B cell (primary cell): ENCODE measurements at regions of chr16 and their contacts with region 1.

Region 1: DNA sequence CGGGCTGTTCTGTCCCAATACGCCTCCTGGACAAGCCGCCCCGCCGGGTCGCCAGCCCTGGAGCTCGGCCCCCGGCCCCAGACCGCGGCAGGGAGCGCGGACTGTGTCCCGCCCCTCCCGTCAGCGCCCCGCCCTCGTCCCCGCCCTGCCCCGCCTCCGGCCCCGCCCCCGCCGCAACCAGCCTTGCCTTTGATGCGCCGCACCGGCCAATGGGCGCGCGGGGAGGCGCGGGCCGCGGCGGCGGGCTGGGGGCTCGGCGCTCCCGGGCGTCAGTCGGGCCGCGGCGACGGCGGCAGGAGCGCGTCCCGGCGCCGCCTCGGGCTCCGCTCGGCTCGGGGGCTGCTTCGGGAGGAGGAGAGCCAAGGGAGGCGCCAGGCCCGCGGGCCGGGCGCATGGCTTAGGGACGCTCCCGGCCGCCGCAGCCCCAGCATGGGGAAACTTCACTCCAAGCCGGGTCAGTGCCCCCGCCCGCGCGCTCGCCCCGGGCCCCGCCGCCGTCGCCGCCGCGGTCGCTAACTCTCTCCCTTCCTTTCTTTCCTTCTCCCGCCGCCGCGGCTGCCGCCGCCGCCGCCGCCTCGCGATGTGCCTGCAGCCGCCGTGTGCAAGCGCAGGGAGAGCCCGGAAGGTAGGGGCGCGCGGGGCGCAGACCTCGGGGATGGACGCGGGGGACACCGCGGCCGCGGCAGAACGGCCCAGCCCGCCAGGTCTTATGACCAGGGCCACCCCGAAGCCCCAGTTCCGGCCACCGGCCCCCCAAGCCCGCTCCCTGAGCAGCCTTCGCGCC is at the start of gene NKD1:
- DNase-seq: peak; percentile 80
- ATAC-seq: peak; percentile 88
- H3K4me3 ChIP-seq: peak within 1 kb of the TSS; percentile 57 to 90 (median 80)
- H3K4me3 Mint-ChIP-seq: peak within 1 kb of the TSS; percentile 94
- H3K27ac ChIP-seq: no peak within 1 kb of the TSS
- H3K27ac Mint-ChIP-seq: peak within 1 kb of the TSS; percentile 77
- H3K4me1 ChIP-seq: peaks cover 6 to 12% of the 10 kb centered on the region in 2 donors
- H3K4me1 Mint-ChIP-seq: peaks cover 7% of the 10 kb centered on the region
- H3K27me3 ChIP-seq: peaks cover 0 to 30% (median 2%) of the 10 kb centered on the region in 4 experiments
- H3K27me3 Mint-ChIP-seq: peaks cover 32% of the 10 kb centered on the region
- CTCF ChIP-seq: no peak
- total RNA-seq, gene NKD1: 1.9 and 2.7 TPM in 2 replicates

Region 2: DNA sequence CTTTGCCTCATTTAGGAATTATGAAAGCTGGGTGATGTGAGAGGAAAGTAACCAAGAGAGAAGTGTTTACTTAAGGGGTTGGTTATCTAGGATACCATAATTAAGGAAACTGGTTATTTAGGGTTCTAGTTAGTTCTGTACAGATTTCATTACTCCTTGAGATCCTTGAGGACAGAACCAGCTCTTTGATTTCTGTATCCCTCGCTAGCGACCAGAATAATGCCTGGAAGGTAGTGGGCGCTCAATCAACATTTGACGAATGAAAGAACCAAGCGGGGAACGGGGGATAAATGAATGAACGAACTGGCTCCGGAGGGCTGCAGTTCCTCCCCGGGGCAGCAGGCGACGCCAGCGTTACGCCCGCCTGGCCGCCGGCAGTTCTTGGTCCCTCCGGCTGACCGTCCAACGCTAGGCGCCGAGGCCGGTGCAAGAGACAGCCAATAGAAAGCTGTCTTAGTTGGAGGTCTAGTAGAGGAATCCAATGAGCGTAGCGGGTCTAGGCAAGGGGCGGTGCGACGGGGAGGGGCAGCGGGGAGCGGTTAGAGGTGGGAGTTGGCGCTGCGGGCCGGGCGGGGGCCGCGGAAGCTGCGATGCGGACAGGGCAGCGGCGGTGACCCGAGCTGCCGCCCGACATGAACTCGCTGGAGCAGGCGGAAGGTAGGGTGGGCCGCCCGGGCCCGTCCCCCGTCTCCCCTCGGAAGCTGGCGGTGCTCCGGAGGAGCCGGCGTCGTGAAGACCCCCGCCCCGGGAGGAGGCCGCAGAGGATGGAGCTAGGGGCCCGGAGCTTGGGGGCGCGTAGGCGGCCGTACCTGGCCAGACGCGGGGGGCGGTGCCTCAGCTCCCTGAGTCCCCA is 523.4 kb before region 1 on chr16 and contains the start of gene CNEP1R1:
- CTCF ChIA-PET with region 1: no interaction called
- POLR2A ChIA-PET with region 1: no interaction called
- intact Hi-C with region 1: loop called (anchors 5 kb)
- DNase-seq: peak; percentile 98
- ATAC-seq: peak; percentile 94
- H3K4me3 ChIP-seq: peak within 1 kb of the TSS; percentile 87 to 93 (median 92)
- H3K4me3 Mint-ChIP-seq: peak within 1 kb of the TSS; percentile 93
- H3K27ac ChIP-seq: peak within 1 kb of the TSS; percentile 31 to 78
- H3K27ac Mint-ChIP-seq: peak within 1 kb of the TSS; percentile 89
- H3K4me1 ChIP-seq: peaks cover 12 to 14% of the 10 kb centered on the region in 2 donors
- H3K4me1 Mint-ChIP-seq: peaks cover 23% of the 10 kb centered on the region
- H3K27me3 ChIP-seq: no peaks in the 10 kb centered on the region
- H3K27me3 Mint-ChIP-seq: peaks cover 7% of the 10 kb centered on the region
- CTCF ChIP-seq: peak; percentile 100
- total RNA-seq, gene CNEP1R1: 32.9 and 36.9 TPM in 2 replicates

Region 3: GRCh38 chr16:50210266-50211038 is 337.9 kb before region 1 on chr16:
- CTCF ChIA-PET with region 1: no interaction called
- POLR2A ChIA-PET with region 1: no interaction called
- intact Hi-C with region 1: no loop called
- DNase-seq: peak; percentile 59
- ATAC-seq: peak; percentile 77
- H3K4me3 ChIP-seq: no peak overlapping the region
- H3K4me3 Mint-ChIP-seq: peak overlapping the region; percentile 38
- H3K27ac ChIP-seq: peak overlapping the region in 1 of 2 donors; percentile 20
- H3K27ac Mint-ChIP-seq: peak overlapping the region; percentile 67
- H3K4me1 ChIP-seq: peaks cover 17% of the 10 kb centered on the region in 2 donors
- H3K4me1 Mint-ChIP-seq: peaks cover 28% of the 10 kb centered on the region
- H3K27me3 ChIP-seq: no peaks in the 10 kb centered on the region
- H3K27me3 Mint-ChIP-seq: no peaks in the 10 kb centered on the region
- CTCF ChIP-seq: peak; percentile 56

Region 4: GRCh38 chr16:50368410-50369132 is 179.7 kb before region 1 on chr16 and contains the start of gene BRD7:
- CTCF ChIA-PET with region 1: no interaction called
- POLR2A ChIA-PET with region 1: no interaction called
- intact Hi-C with region 1: loop called (anchors 1 kb)
- DNase-seq: peak; percentile 85
- ATAC-seq: peak; percentile 95
- H3K4me3 ChIP-seq: peak within 1 kb of the TSS; percentile 45 to 82 (median 66)
- H3K4me3 Mint-ChIP-seq: peak within 1 kb of the TSS; percentile 91
- H3K27ac ChIP-seq: peak within 1 kb of the TSS; percentile 57 to 88
- H3K27ac Mint-ChIP-seq: peak within 1 kb of the TSS; percentile 88
- H3K4me1 ChIP-seq: peaks cover 26 to 32% of the 10 kb centered on the region in 2 donors
- H3K4me1 Mint-ChIP-seq: peaks cover 41% of the 10 kb centered on the region
- H3K27me3 ChIP-seq: no peaks in the 10 kb centered on the region
- H3K27me3 Mint-ChIP-seq: peaks cover 4% of the 10 kb centered on the region
- CTCF ChIP-seq: peak; percentile 56
- total RNA-seq, gene BRD7: 64.5 and 69.7 TPM in 2 replicates

Region 5: DNA sequence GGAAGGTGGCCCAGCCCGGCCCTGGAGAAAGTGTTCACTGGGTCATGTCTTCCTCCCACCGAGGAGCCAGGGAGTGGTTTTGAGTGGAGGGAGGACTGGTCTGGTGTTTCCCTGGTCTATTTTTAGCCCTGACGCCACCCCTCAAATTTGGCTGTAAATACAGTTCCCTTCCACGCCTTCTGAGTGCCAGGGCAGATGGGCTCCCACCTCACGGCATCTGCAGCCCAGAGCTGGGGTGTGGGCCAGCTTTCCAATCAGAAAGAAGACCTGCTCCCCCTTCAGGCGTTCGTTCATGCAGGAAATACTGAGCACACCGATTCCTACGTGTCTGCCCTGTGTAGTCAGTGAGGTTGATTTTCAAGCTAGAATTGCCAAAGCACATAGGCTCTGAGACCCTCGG is 79.1 kb after region 1 on chr16:
- CTCF ChIA-PET with region 1: interaction called, 13 read pairs
- POLR2A ChIA-PET with region 1: no interaction called
- intact Hi-C with region 1: loop called (anchors 1 kb)
- DNase-seq: peak; percentile 65
- ATAC-seq: peak; percentile 82
- H3K4me3 ChIP-seq: no peak overlapping the region
- H3K4me3 Mint-ChIP-seq: peak overlapping the region; percentile 53
- H3K27ac ChIP-seq: no peak overlapping the region
- H3K27ac Mint-ChIP-seq: peak overlapping the region; percentile 66
- H3K4me1 ChIP-seq: peaks cover 12 to 14% of the 10 kb centered on the region in 2 donors
- H3K4me1 Mint-ChIP-seq: peaks cover 13% of the 10 kb centered on the region
- H3K27me3 ChIP-seq: no peaks in the 10 kb centered on the region
- H3K27me3 Mint-ChIP-seq: no peaks in the 10 kb centered on the region
- CTCF ChIP-seq: peak; percentile 16

Region 6: DNA sequence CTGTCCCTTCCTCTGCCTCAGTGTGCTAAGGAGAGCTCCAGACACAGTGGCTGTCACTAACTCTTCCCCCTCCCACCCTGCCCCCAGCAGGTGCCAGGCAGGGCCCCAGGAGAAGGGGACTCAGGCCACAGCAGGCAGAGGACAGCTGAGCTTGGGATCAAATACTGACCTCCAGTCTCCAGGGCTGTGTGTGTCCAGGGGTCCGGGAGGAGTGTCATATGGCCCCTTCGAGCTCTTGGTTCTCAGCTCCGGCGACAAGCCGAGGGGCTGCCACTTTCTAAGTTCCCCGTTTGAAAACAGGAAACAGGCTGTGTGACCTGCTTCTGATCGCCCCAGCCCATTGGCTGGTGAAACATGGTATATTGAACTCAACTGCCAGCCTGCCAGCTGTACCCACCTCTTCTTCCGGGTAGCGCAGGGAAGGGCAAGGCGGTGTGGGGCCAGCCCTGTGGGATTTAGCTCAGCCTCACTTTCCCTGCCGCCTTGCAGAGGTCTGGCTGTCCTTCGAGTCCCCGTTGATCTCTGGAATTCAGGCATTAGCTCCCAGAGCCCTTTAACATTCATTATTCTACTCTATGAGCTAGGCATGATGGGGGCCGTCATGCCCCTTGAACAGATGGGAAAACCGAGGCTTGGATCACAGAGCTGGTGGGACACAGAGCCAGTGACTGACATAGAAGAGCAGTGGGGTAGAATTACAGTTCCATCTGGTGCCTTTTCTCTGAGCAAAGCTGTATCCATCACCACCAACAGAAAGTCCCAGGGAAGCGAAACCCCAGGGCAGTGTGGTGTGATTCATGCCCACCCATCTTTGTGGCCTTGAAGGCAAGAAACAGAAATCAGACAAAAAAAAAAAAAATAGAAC is 132.9 kb after region 1 on chr16 and contains the start of gene SNX20:
- CTCF ChIA-PET with region 1: no interaction called
- POLR2A ChIA-PET with region 1: no interaction called
- intact Hi-C with region 1: loop called (anchors 5 kb)
- DNase-seq: peak; percentile 81
- ATAC-seq: peak; percentile 76
- H3K4me3 ChIP-seq: peak within 1 kb of the TSS; percentile 76 to 96 (median 93)
- H3K4me3 Mint-ChIP-seq: peak within 1 kb of the TSS; percentile 93
- H3K27ac ChIP-seq: peak within 1 kb of the TSS; percentile 92 to 95
- H3K27ac Mint-ChIP-seq: peak within 1 kb of the TSS; percentile 98
- H3K4me1 ChIP-seq: peaks cover 74 to 76% of the 10 kb centered on the region in 2 donors
- H3K4me1 Mint-ChIP-seq: peaks cover 73% of the 10 kb centered on the region
- H3K27me3 ChIP-seq: no peaks in the 10 kb centered on the region
- H3K27me3 Mint-ChIP-seq: no peaks in the 10 kb centered on the region
- CTCF ChIP-seq: no peak
- total RNA-seq, gene SNX20: 43.0 and 47.7 TPM in 2 replicates

Region 7: DNA sequence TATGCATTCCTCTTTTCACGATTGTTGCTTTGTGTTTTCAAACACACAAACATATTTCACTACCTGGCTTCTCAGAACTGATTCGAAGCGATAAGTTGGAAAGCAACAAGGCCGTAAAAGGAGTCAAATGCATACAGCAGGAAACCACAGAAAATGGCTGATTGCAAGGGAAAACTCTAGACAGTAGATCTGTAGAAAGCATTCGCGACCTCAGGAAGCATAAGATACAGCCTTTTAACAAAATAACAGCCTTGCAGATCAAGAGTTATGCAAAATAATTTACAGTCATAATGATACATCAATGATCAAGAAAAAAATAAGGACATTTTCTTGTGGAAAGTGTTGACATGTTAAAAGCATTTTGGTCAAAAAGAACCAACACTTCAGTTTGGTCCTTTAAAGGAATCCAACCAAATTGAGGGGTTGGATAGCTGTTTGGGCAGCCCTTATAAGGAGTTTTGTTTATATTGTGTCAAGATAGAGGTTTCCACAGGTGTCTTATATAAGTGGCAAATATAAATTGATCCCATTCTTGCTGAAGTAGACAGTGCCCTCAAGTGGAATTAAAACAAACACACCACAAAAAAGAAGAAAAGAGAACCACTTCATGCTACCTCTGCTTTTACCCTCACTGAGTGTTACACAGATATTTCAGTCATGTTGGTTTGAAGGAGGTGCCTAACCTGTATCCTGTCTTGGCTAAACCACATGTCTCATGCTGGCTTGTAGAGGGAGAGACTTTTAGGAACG is 199.1 kb after region 1 on chr16:
- CTCF ChIA-PET with region 1: interaction called, 4 read pairs
- POLR2A ChIA-PET with region 1: no interaction called
- intact Hi-C with region 1: loop called (anchors 1 kb)
- DNase-seq: peak; percentile 60
- ATAC-seq: peak; percentile 61
- H3K4me3 ChIP-seq: no peak overlapping the region
- H3K4me3 Mint-ChIP-seq: peak overlapping the region; percentile 74
- H3K27ac ChIP-seq: peak overlapping the region in 1 of 2 donors; percentile 58
- H3K27ac Mint-ChIP-seq: peak overlapping the region; percentile 59
- H3K4me1 ChIP-seq: peaks cover 33 to 39% of the 10 kb centered on the region in 2 donors
- H3K4me1 Mint-ChIP-seq: peaks cover 55% of the 10 kb centered on the region
- H3K27me3 ChIP-seq: no peaks in the 10 kb centered on the region
- H3K27me3 Mint-ChIP-seq: no peaks in the 10 kb centered on the region
- CTCF ChIP-seq: peak; percentile 74